ENCODE measurements at regions of chr10 and their contacts with region 1.

Region 1: DNA sequence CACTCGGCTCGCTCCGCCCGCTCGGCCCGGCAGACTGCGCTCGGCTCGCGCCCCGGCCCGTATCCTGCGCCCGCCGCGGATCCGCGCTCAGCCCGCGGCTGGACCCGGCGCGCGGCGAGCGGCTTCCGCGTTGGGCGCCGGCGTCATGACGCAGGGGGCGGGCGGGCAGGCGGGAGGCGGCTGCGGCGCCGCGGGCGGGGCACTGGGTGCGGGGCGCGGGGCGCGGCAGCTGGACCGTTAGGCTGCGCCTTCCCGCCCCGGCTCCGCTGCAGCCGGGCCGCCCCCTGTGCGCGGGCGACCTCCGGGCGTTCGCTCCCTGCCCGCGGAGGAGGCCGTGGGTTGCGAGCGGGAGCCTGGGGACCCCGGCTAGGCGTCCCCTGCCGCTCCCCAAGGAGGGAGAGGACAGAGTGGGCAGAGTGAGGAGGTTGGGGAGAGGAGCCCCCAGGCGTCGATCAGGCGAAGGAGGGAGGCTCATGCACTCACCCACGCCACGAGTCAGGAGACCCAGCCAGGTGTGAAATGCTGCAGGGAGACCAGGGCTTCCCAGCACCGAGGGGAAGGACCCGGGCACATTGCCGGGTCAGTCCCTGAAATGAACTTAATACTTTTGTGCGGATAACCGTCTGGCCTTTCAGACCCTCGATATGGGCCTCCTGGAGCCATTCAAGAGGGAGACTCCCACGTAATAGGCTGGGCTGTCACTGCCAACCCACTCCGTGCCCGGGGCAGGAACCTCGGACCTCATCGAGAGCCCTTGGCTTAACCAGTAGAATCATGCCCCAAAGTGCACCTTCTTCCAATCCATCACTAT is at the start of gene PIP4K2A:
- DNase-seq: peak; percentile 56 to 94 (median 74)
- ATAC-seq: peak; percentile 77
- H3K4me3 ChIP-seq: peak within 1 kb of the TSS; percentile 90
- H3K4me3 Mint-ChIP-seq: peak within 1 kb of the TSS; percentile 96
- H3K27ac ChIP-seq: peak within 1 kb of the TSS; percentile 77 to 86
- H3K27ac Mint-ChIP-seq: peak within 1 kb of the TSS; percentile 88
- H3K4me1 ChIP-seq: peaks cover 16% of the 10 kb centered on the region
- H3K4me1 Mint-ChIP-seq: peaks cover 38% of the 10 kb centered on the region
- H3K27me3 ChIP-seq: no peaks in the 10 kb centered on the region
- H3K27me3 Mint-ChIP-seq: no peaks in the 10 kb centered on the region
- CTCF ChIP-seq: no peak
- total RNA-seq, gene PIP4K2A: 75.4 to 87.2 TPM

Region 2: GRCh38 chr10:22325272-22326144 is 389.2 kb before region 1 on chr10:
- CTCF ChIA-PET with region 1: no interaction called
- POLR2A ChIA-PET with region 1: no interaction called
- intact Hi-C with region 1: loop called in 1 of 2 experiments (anchors 10 kb)
- DNase-seq: peak in 13 of 14 experiments; percentile 61 to 93 (median 76)
- ATAC-seq: peak; percentile 45
- H3K4me3 ChIP-seq: peak overlapping the region; percentile 69
- H3K4me3 Mint-ChIP-seq: peak overlapping the region; percentile 87
- H3K27ac ChIP-seq: peak overlapping the region; percentile 53 to 56
- H3K27ac Mint-ChIP-seq: peak overlapping the region; percentile 85
- H3K4me1 ChIP-seq: peaks cover 23% of the 10 kb centered on the region
- H3K4me1 Mint-ChIP-seq: peaks cover 45% of the 10 kb centered on the region
- H3K27me3 ChIP-seq: peaks cover 5 to 25% of the 10 kb centered on the region in 2 experiments
- H3K27me3 Mint-ChIP-seq: peaks cover 61% of the 10 kb centered on the region
- CTCF ChIP-seq: no peak

Region 3: GRCh38 chr10:22630234-22631174 is 84.2 kb before region 1 on chr10:
- CTCF ChIA-PET with region 1: interaction called, 3 read pairs
- POLR2A ChIA-PET with region 1: interaction called, 20 read pairs
- intact Hi-C with region 1: no loop called
- DNase-seq: peak in 4 of 14 experiments; percentile 55 to 89 (median 86)
- ATAC-seq: peak; percentile 87
- H3K4me3 ChIP-seq: peak overlapping the region; percentile 42
- H3K4me3 Mint-ChIP-seq: peak overlapping the region; percentile 63
- H3K27ac ChIP-seq: peak overlapping the region; percentile 82 to 87
- H3K27ac Mint-ChIP-seq: peak overlapping the region; percentile 90
- H3K4me1 ChIP-seq: peaks cover 67% of the 10 kb centered on the region
- H3K4me1 Mint-ChIP-seq: peaks cover 99% of the 10 kb centered on the region
- H3K27me3 ChIP-seq: no peaks in the 10 kb centered on the region
- H3K27me3 Mint-ChIP-seq: no peaks in the 10 kb centered on the region
- CTCF ChIP-seq: no peak

Region 4: DNA sequence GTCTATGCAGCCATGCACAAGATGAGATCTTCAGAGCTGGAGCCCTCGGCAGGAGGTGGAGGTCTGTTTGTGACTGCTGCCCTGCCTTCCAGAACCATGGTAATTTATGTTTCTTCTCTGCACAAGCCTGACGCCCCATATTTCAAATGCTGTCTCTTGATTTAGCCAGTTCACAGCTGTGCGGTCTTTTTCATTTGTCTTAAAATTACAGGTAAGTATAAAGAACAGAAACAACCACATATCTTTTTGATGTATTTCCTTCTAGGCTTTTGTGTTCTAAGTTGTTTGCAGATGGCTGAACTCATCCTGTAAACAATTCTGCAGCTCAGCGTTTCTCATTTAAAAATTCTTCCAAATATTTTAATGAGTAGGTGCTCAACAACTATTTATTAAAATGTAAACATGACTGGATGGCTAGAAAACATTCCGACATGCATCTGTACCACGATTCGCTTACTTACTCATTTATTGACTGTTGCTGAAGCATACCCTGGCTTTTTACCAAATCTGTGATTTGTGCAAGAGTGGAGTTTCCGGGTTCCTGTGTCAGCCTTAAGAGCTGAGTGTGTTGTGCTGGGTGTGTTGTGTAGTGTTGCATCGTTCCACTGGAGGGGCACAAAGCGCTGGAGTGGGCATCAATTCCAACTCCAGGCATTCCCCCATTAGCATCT is 59.2 kb before region 1 on chr10:
- CTCF ChIA-PET with region 1: interaction called, 8 read pairs
- POLR2A ChIA-PET with region 1: interaction called, 53 read pairs
- intact Hi-C with region 1: loop called (anchors 2 kb)
- DNase-seq: peak in 12 of 14 experiments; percentile 17 to 81 (median 51)
- ATAC-seq: peak; percentile 74
- H3K4me3 ChIP-seq: peak overlapping the region; percentile 27
- H3K4me3 Mint-ChIP-seq: peak overlapping the region; percentile 82
- H3K27ac ChIP-seq: peak overlapping the region; percentile 58 to 67
- H3K27ac Mint-ChIP-seq: peak overlapping the region; percentile 91
- H3K4me1 ChIP-seq: peaks cover 92% of the 10 kb centered on the region
- H3K4me1 Mint-ChIP-seq: peaks cover 96% of the 10 kb centered on the region
- H3K27me3 ChIP-seq: no peaks in the 10 kb centered on the region
- H3K27me3 Mint-ChIP-seq: no peaks in the 10 kb centered on the region
- CTCF ChIP-seq: no peak

Region 5: DNA sequence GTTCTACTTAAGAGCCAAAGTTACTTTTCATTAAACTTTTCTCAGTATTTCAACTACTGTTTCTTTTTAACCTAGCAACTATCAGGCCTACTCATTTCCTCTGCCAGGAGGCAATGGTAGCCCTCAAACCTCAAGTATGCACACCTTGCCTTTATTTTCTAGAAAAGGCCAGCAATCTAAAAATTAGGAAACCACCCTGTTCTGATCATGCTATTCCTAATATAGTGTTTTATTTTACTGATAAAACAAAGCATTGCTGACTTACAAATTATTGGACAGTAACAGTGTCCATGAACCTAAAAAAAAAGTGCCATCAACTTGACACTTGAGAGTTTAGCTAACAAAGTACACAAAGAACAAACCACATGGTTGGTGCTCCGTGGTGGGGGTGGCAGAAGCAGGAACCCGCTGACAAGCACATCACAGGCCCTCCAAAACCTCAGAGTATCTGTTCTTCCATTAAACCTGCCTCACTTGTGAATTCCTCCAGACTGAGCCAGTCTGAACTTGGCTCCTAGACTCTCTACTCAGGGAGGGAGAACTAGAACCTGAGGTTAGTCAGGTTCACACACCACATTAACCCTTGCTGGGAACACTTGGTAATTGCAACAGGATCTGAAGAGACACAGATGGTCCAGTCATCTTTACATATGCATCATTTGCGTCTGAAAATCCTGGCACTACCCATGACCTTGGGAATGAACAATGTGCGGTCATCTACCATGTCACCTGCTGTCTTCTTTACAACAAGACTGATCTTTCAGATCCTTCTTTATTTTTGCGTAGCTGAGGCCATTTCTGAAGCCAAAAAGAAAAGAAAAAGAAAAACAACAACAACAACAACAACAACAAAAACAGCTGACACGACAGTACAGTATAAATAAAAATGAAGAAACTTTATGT is 32.2 kb before region 1 on chr10:
- CTCF ChIA-PET with region 1: interaction called, 3 read pairs
- POLR2A ChIA-PET with region 1: interaction called, 24 read pairs
- intact Hi-C with region 1: loop called (anchors 1 to 2 kb)
- DNase-seq: peak; percentile 23 to 88 (median 54)
- ATAC-seq: peak; percentile 57
- H3K4me3 ChIP-seq: peak overlapping the region; percentile 24
- H3K4me3 Mint-ChIP-seq: peak overlapping the region; percentile 61
- H3K27ac ChIP-seq: peak overlapping the region; percentile 66 to 75
- H3K27ac Mint-ChIP-seq: peak overlapping the region; percentile 99
- H3K4me1 ChIP-seq: peaks cover 75% of the 10 kb centered on the region
- H3K4me1 Mint-ChIP-seq: peaks cover 92% of the 10 kb centered on the region
- H3K27me3 ChIP-seq: no peaks in the 10 kb centered on the region
- H3K27me3 Mint-ChIP-seq: no peaks in the 10 kb centered on the region
- CTCF ChIP-seq: no peak

Region 6: GRCh38 chr10:22727663-22728062 is 13.0 kb after region 1 on chr10:
- CTCF ChIA-PET with region 1: no interaction called
- POLR2A ChIA-PET with region 1: no interaction called
- intact Hi-C with region 1: no loop called
- DNase-seq: no peak
- ATAC-seq: no peak
- H3K4me3 ChIP-seq: no peak overlapping the region
- H3K4me3 Mint-ChIP-seq: no peak overlapping the region
- H3K27ac ChIP-seq: no peak overlapping the region
- H3K27ac Mint-ChIP-seq: no peak overlapping the region
- H3K4me1 ChIP-seq: peaks cover 5% of the 10 kb centered on the region
- H3K4me1 Mint-ChIP-seq: peaks cover 18% of the 10 kb centered on the region
- H3K27me3 ChIP-seq: no peaks in the 10 kb centered on the region
- H3K27me3 Mint-ChIP-seq: no peaks in the 10 kb centered on the region
- CTCF ChIP-seq: no peak

Region 7: GRCh38 chr10:22784668-22785067 is 70.0 kb after region 1 on chr10:
- CTCF ChIA-PET with region 1: no interaction called
- POLR2A ChIA-PET with region 1: no interaction called
- intact Hi-C with region 1: no loop called
- DNase-seq: no peak
- ATAC-seq: no peak
- H3K4me3 ChIP-seq: no peak overlapping the region
- H3K4me3 Mint-ChIP-seq: no peak overlapping the region
- H3K27ac ChIP-seq: no peak overlapping the region
- H3K27ac Mint-ChIP-seq: no peak overlapping the region
- H3K4me1 ChIP-seq: no peaks in the 10 kb centered on the region
- H3K4me1 Mint-ChIP-seq: no peaks in the 10 kb centered on the region
- H3K27me3 ChIP-seq: no peaks in the 10 kb centered on the region
- H3K27me3 Mint-ChIP-seq: no peaks in the 10 kb centered on the region
- CTCF ChIP-seq: no peak

Measured in CD4-positive, alpha-beta T cell (primary cell).